Uterus (tissue), 4 donors: ENCODE measurements at regions of chr2 and their contacts with region 1.

Region 1: GRCh38 chr2:231900486-231900942 is 25.7 kb downstream of the NPPC start:
- DNase-seq: peak; percentile 16 to 23
- H3K4me3 ChIP-seq: no peak overlapping the region
- H3K27ac ChIP-seq: no peak overlapping the region
- H3K4me1 ChIP-seq: no peaks in the 10 kb centered on the region
- H3K27me3 ChIP-seq: no peaks in the 10 kb centered on the region
- CTCF ChIP-seq: peak in 2 of 4 experiments; percentile 14 to 33
- POLR2A ChIP-seq: no peak

Region 2: GRCh38 chr2:232521959-232522622 is 621.6 kb after region 1 on chr2:
- intact Hi-C with region 1: loop called (anchors 10 kb)
- DNase-seq: peak in 1 of 2 donors; percentile 53
- H3K4me3 ChIP-seq: peak overlapping the region in 1 of 2 donors; percentile 17
- H3K27ac ChIP-seq: no peak overlapping the region
- H3K4me1 ChIP-seq: peaks cover 0 to 12% of the 10 kb centered on the region in 2 donors
- H3K27me3 ChIP-seq: peaks cover 14 to 27% of the 10 kb centered on the region in 2 donors
- CTCF ChIP-seq: peak; percentile 65 to 86 (median 78)
- POLR2A ChIP-seq: no peak